ENCODE measurements at regions of chr16 and their contacts with region 1.

Region 1: GRCh38 chr16:11727796-11728543 is 14.7 kb downstream of the TXNDC11 start:
- DNase-seq: no peak
- ATAC-seq: no peak
- H3K4me3 Mint-ChIP-seq: no peak overlapping the region
- H3K27ac Mint-ChIP-seq: no peak overlapping the region
- H3K4me1 Mint-ChIP-seq: peaks cover 16% of the 10 kb centered on the region
- H3K27me3 Mint-ChIP-seq: no peaks in the 10 kb centered on the region

Region 2: GRCh38 chr16:11742539-11743307 is 14.8 kb after region 1 on chr16 and contains the start of gene TXNDC11:
- CTCF ChIA-PET with region 1: interaction called, 12 read pairs
- POLR2A ChIA-PET with region 1: interaction called, 14 read pairs
- DNase-seq: peak; percentile 99
- ATAC-seq: peak; percentile 92
- H3K4me3 Mint-ChIP-seq: peak within 1 kb of the TSS; percentile 87
- H3K27ac Mint-ChIP-seq: peak within 1 kb of the TSS; percentile 94
- H3K4me1 Mint-ChIP-seq: peaks cover 55% of the 10 kb centered on the region
- H3K27me3 Mint-ChIP-seq: no peaks in the 10 kb centered on the region
- total RNA-seq, gene TXNDC11: 30.1 to 34.4 TPM

Measured in activated CD8-positive, alpha-beta T cell treated with anti-CD3 and anti-CD28 coated beads, Interleukin-2, amount 10 ng/mL, durations not matched to agents 7 days and 5 days (primary cell).